ENCODE measurements at regions of chr11 and their contacts with region 1.

Region 1: DNA sequence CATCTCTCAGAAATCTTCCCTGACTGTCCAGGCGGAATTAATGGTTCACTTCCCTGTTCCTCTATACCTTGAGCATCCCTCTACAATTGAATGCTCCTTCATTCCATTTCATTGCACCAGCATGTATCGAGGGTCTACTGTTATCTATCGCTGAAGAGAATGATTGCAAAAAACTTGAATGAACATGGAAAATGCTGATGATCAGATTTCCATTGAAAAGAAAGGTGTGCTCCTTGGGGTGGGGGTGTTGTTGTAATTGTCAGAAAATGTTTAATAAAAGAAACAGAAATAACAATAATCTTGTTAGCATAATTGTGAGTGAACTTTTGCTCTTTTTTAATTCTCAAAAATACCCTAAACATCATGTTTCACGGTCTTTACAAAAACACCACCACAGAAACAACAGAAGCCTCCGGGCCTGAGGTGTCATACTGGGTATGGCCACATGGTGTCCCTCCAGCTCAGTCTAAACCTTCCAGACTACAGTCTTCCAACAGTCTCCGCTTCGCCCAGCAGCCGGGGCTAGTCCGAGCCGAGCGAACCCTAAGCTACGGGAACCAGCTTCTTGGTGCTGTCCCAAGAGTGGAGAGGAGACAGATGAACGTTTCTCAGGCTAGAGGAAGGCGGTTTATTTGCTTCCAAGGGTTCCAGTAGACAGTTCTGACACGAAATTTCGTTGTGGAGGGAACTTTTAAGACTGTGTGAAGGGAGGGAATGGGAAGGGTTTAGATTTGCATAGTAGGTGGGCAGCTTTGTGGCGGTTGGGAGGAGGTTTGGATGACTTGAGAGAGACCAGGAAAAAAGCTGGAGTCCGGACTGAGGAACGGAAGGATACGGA is 75.8 kb upstream of the ZBED5 start:
- DNase-seq: peak; percentile 88
- ATAC-seq: peak; percentile 96
- H3K4me3 ChIP-seq: peak overlapping the region; percentile 38 to 68 (median 58)
- H3K4me3 Mint-ChIP-seq: peak overlapping the region; percentile 79
- H3K27ac ChIP-seq: no peak overlapping the region
- H3K27ac Mint-ChIP-seq: peak overlapping the region; percentile 3
- H3K4me1 ChIP-seq: peaks cover 22 to 24% of the 10 kb centered on the region in 2 donors
- H3K4me1 Mint-ChIP-seq: peaks cover 16% of the 10 kb centered on the region
- H3K27me3 ChIP-seq: peaks cover 0 to 43% (median 27%) of the 10 kb centered on the region in 4 experiments
- H3K27me3 Mint-ChIP-seq: peaks cover 22% of the 10 kb centered on the region
- CTCF ChIP-seq: peak; percentile 97

Region 2: GRCh38 chr11:10808553-10809372 is 124.9 kb before region 1 on chr11 and contains the start of gene EIF4G2:
- CTCF ChIA-PET with region 1: interaction called, 8 read pairs
- POLR2A ChIA-PET with region 1: interaction called, 7 read pairs
- intact Hi-C with region 1: loop called (anchors 5 kb)
- DNase-seq: peak; percentile 99
- ATAC-seq: peak; percentile 89
- H3K4me3 ChIP-seq: peak within 1 kb of the TSS; percentile 89 to 97 (median 94)
- H3K4me3 Mint-ChIP-seq: peak within 1 kb of the TSS; percentile 99
- H3K27ac ChIP-seq: peak within 1 kb of the TSS; percentile 92 to 96
- H3K27ac Mint-ChIP-seq: peak within 1 kb of the TSS; percentile 99
- H3K4me1 ChIP-seq: peaks cover 24 to 26% of the 10 kb centered on the region in 2 donors
- H3K4me1 Mint-ChIP-seq: peaks cover 39% of the 10 kb centered on the region
- H3K27me3 ChIP-seq: no peaks in the 10 kb centered on the region
- H3K27me3 Mint-ChIP-seq: no peaks in the 10 kb centered on the region
- CTCF ChIP-seq: no peak
- total RNA-seq, gene EIF4G2: 530 and 592 TPM in 2 replicates

Region 3: DNA sequence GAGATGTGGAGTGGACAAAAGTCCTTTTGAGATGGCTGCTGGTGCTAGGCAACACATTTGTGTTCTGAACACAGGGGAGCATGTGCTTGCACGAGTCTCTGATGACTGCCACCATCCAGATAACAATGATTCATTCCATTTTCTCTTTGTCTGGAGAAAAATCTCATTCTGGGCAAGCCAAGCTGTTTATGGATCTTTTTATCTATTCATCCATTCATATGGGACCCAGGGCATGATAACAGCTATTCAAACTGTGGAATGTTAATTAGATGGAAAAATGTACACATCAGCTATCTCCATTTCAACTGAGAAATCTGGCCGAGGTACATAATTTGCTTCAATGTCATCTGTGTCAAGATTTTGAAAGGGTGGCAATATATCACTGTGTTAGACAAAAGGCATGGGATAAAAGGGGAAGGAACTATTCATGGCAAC is 41.6 kb after region 1 on chr11:
- CTCF ChIA-PET with region 1: interaction called, 6 read pairs
- POLR2A ChIA-PET with region 1: interaction called, 8 read pairs
- intact Hi-C with region 1: loop called (anchors 5 kb)
- DNase-seq: no peak
- ATAC-seq: no peak
- H3K4me3 ChIP-seq: no peak overlapping the region
- H3K4me3 Mint-ChIP-seq: no peak overlapping the region
- H3K27ac ChIP-seq: no peak overlapping the region
- H3K27ac Mint-ChIP-seq: no peak overlapping the region
- H3K4me1 ChIP-seq: peaks cover 49% of the 10 kb centered on the region in 2 donors
- H3K4me1 Mint-ChIP-seq: peaks cover 52% of the 10 kb centered on the region
- H3K27me3 ChIP-seq: no peaks in the 10 kb centered on the region
- H3K27me3 Mint-ChIP-seq: no peaks in the 10 kb centered on the region
- CTCF ChIP-seq: no peak

Region 4: DNA sequence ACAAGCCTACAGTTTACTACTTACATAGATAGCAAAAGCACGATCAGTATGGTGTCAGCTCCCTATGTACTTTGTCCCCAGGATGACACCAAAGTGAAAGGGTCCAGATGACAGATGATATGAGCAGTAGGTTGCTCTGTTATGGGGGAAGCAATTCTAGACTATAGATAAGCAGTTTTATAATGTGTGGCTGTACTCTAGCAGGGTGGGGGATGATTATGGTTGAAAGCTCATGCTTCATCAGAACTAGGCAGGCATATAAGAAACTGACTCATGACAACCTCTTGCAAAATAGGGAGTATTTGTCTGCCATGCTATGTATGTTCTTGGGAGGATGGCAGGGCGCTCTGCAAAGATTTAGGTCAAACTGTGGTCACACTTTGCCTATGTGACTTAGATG is 82.4 kb after region 1 on chr11:
- CTCF ChIA-PET with region 1: interaction called, 154 read pairs
- POLR2A ChIA-PET with region 1: no interaction called
- intact Hi-C with region 1: no loop called
- DNase-seq: no peak
- ATAC-seq: no peak
- H3K4me3 ChIP-seq: no peak overlapping the region
- H3K4me3 Mint-ChIP-seq: no peak overlapping the region
- H3K27ac ChIP-seq: no peak overlapping the region
- H3K27ac Mint-ChIP-seq: no peak overlapping the region
- H3K4me1 ChIP-seq: peaks cover 15% of the 10 kb centered on the region in 2 donors
- H3K4me1 Mint-ChIP-seq: peaks cover 18% of the 10 kb centered on the region
- H3K27me3 ChIP-seq: no peaks in the 10 kb centered on the region
- H3K27me3 Mint-ChIP-seq: no peaks in the 10 kb centered on the region
- CTCF ChIP-seq: no peak

Region 5: GRCh38 chr11:11036848-11037732 is 103.4 kb after region 1 on chr11:
- CTCF ChIA-PET with region 1: interaction called, 12 read pairs
- POLR2A ChIA-PET with region 1: no interaction called
- intact Hi-C with region 1: no loop called
- DNase-seq: peak; percentile 57
- ATAC-seq: peak; percentile 31
- H3K4me3 ChIP-seq: no peak overlapping the region
- H3K4me3 Mint-ChIP-seq: no peak overlapping the region
- H3K27ac ChIP-seq: no peak overlapping the region
- H3K27ac Mint-ChIP-seq: no peak overlapping the region
- H3K4me1 ChIP-seq: no peaks in the 10 kb centered on the region
- H3K4me1 Mint-ChIP-seq: no peaks in the 10 kb centered on the region
- H3K27me3 ChIP-seq: peaks cover 0 to 16% (median 3%) of the 10 kb centered on the region in 4 experiments
- H3K27me3 Mint-ChIP-seq: peaks cover 35% of the 10 kb centered on the region
- CTCF ChIP-seq: peak; percentile 69

Region 6: DNA sequence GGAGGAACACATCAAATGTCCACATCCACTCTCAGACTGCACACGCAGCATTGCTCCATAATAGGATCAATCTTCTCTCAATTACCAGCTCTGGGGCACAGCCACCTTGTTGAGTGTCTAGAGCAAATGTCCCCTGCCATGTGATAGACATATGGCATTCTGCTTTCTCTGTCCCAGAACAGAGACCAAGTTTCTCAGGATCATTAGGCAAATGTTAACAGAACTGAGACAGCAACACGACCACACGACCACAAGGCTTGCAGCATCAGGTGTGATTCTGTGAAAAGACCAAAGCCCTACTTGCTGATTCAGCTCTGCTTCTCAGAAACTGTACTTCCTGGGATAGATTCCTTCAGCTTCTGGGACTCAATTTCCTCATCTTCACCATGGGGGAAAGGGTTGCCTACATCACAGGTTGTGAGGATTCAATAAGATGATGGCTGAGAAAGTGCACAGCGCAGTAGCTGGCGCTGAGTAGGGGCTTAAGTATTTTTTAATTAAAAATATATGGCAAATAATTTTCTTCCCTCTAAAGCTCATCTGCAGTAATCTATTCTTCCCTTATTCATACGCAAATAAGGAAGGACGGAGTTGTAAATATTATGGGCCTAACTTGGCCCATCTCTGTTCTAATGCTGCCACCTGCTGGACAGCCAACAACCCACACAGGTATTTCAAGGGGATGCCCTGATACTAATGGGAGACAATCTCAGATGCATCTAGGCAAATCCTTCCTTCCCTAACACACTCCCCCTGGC is 853.8 kb after region 1 on chr11:
- CTCF ChIA-PET with region 1: interaction called, 22 read pairs
- POLR2A ChIA-PET with region 1: no interaction called
- intact Hi-C with region 1: loop called (anchors 1 kb)
- DNase-seq: peak; percentile 77
- ATAC-seq: peak; percentile 68
- H3K4me3 ChIP-seq: no peak overlapping the region
- H3K4me3 Mint-ChIP-seq: no peak overlapping the region
- H3K27ac ChIP-seq: no peak overlapping the region
- H3K27ac Mint-ChIP-seq: no peak overlapping the region
- H3K4me1 ChIP-seq: no peaks in the 10 kb centered on the region
- H3K4me1 Mint-ChIP-seq: no peaks in the 10 kb centered on the region
- H3K27me3 ChIP-seq: peaks cover 0 to 10% (median 3%) of the 10 kb centered on the region in 4 experiments
- H3K27me3 Mint-ChIP-seq: peaks cover 28% of the 10 kb centered on the region
- CTCF ChIP-seq: peak; percentile 95